Stomach (tissue), 19 donors: ENCODE measurements at regions of chr18 and their contacts with region 1.

Region 1: GRCh38 chr18:30601541-30601940 is 441.0 kb downstream of the DSC3 start:
- DNase-seq: no peak
- H3K4me3 ChIP-seq: no peak overlapping the region
- H3K27ac ChIP-seq: no peak overlapping the region
- H3K4me1 ChIP-seq: no peaks in the 10 kb centered on the region
- H3K27me3 ChIP-seq: no peaks in the 10 kb centered on the region
- CTCF ChIP-seq: no peak
- EP300 ChIP-seq: no peak
- POLR2A ChIP-seq: no peak

Region 2: DNA sequence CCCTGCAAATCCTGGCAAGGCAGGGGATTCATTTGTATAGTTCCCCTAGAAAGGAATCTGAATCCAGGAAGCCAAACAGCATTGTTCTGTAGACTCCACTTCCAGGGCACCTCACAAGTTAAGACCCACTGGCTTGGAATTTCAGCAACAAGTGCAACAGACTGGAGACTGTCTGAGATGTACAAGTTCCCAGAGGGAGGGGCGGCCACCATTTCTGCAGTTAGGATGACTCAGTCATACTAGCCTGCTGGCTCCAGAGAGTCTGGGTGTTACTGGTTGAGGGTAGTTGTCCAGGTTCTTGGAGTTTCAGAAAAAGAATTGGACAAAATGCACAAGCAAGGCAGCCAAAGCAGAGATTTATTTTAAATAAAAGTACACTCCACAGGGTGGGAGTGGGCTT is 56.8 kb after region 1 on chr18:
- intact Hi-C with region 1: loop called (anchors 10 kb)
- DNase-seq: no peak
- H3K4me3 ChIP-seq: no peak overlapping the region
- H3K27ac ChIP-seq: no peak overlapping the region
- H3K4me1 ChIP-seq: no peaks in the 10 kb centered on the region
- H3K27me3 ChIP-seq: no peaks in the 10 kb centered on the region
- CTCF ChIP-seq: no peak
- EP300 ChIP-seq: no peak
- POLR2A ChIP-seq: no peak

Region 3: DNA sequence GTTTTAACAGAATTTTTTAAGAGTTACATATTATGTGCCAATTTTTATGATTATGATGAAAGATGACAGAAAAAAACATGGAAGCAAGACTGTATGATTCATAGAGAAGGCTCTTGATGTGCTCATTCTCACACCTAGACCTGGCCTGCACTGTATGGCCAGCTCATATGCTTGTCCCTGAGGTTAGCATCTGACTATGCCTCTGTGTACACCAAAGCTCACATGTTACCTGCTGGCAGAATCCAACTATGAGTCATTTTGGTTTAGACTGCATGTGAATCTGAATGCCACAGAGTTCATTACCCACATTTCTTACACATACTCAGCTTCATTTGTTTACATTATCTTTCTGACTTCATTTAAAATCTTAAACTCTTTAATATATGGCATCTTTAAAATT is 302.0 kb after region 1 on chr18:
- intact Hi-C with region 1: no loop called
- DNase-seq: no peak
- H3K4me3 ChIP-seq: no peak overlapping the region
- H3K27ac ChIP-seq: no peak overlapping the region
- H3K4me1 ChIP-seq: no peaks in the 10 kb centered on the region
- H3K27me3 ChIP-seq: no peaks in the 10 kb centered on the region
- CTCF ChIP-seq: no peak
- EP300 ChIP-seq: no peak
- POLR2A ChIP-seq: no peak